H1 (cell line): ENCODE measurements at regions of chr3 and their contacts with region 1.

Region 1: DNA sequence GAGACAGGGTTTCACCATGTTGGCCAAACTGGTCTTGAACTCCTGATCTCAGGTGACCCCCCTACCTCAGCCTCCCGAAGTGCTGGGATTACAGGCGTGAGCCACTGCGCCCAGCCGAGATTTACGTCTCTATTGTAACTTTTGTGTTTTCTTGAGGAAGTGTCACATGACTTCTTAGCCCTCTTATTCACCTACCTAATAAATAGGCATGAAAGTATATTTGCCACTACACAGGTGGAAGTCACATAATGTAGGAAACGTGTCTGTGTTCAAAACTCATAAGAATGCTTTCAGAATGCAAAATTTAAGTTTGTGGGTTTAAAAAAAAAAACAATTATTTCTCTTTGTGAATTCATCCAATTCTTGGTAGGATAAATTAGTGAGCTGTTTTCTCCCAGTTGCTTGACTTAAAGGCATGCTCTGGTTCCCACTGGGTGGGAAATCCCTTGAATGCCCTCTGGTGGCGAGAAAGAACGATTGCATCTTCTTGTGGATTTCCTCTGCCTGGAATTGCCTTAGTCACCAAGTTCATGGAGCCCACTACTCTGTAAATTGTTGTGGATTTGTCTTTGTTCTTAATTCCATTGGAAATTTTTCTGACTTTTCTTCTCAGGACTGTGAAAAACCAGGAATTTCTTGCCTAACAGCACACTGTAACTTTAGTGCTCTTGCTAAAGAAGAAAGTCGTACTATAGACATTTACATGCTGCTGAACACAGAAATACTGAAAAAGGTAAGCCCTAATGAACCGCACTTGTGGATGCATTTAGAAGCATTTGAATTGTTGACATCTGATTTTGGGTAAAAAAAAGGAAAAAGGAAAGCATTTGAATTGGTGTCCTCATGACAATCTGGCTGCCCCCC is 82.2 kb upstream of the CTDSPL start:
- DNase-seq: peak in 1 of 2 experiments; percentile 10
- H3K4me3 ChIP-seq: no peak overlapping the region
- H3K27ac ChIP-seq: no peak overlapping the region
- H3K4me1 ChIP-seq: no peaks in the 10 kb centered on the region
- H3K27me3 ChIP-seq: no peaks in the 10 kb centered on the region
- CTCF ChIP-seq: peak; percentile 55 to 89 (median 81)
- EP300 ChIP-seq: no peak
- POLR2A ChIP-seq: no peak
- RAD21 ChIP-seq: peak; percentile 90 to 91

Region 2: GRCh38 chr3:37800022-37800551 is 20.6 kb after region 1 on chr3:
- CTCF ChIA-PET with region 1: interaction called, 13 read pairs
- POLR2A ChIA-PET with region 1: no interaction called
- DNase-seq: no peak
- H3K4me3 ChIP-seq: no peak overlapping the region
- H3K27ac ChIP-seq: no peak overlapping the region
- H3K4me1 ChIP-seq: no peaks in the 10 kb centered on the region
- H3K27me3 ChIP-seq: no peaks in the 10 kb centered on the region
- CTCF ChIP-seq: no peak
- EP300 ChIP-seq: no peak
- POLR2A ChIP-seq: no peak
- RAD21 ChIP-seq: no peak